ENCODE measurements at regions of chr2 and their contacts with region 1.

Region 1: DNA sequence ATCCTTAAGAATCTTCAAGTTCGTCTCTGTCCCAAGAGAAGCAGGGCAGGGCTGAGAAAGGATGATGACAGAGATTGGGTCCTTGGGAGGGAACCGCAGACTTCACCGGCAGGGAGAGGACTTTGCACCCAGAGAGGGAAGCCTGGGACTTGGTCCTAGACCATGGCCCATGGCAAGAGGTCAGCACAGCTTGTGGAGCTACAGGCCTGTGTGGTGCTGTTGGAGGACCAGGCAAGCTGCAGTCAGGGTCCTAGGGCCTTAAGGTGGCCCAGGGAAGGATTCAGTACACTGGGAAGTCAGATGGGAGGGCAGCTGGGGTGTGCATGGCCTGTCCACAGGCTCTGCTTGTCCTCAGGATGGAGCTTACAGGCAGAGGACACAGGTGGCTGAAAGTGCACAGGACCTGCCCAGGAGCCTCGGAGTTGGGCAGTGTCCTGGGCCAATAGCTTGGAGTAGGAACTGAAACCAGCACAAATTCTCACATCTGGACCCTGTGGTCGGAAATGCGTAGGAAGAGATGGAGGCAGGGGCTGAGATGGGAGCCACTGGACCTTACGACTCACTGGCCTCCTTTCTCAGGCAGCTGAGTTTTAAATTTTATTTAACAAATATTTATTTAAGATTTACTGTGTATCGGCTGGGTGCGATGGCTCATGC is 56.4 kb upstream of the TCF7L1 start:
- DNase-seq: no peak
- ATAC-seq: no peak
- H3K4me3 ChIP-seq: no peak overlapping the region
- H3K27ac ChIP-seq: no peak overlapping the region
- H3K4me1 ChIP-seq: no peaks in the 10 kb centered on the region
- H3K27me3 ChIP-seq: peaks cover 11% of the 10 kb centered on the region
- CTCF ChIP-seq: no peak
- POLR2A ChIP-seq: no peak
- RAD21 ChIP-seq: no peak

Region 2: GRCh38 chr2:84980263-84980983 is 96.3 kb before region 1 on chr2:
- CTCF ChIA-PET with region 1: no interaction called
- POLR2A ChIA-PET with region 1: no interaction called
- dilution Hi-C with region 1: no loop called
- in situ Hi-C with region 1: no loop called
- intact Hi-C with region 1: no loop called
- DNase-seq: no peak
- ATAC-seq: no peak
- H3K4me3 ChIP-seq: no peak overlapping the region
- H3K27ac ChIP-seq: peak overlapping the region; percentile 41; the same call in 1 of the 2 replicates
- H3K4me1 ChIP-seq: peaks cover 7% of the 10 kb centered on the region
- H3K27me3 ChIP-seq: no peaks in the 10 kb centered on the region
- CTCF ChIP-seq: no peak
- POLR2A ChIP-seq: no peak
- RAD21 ChIP-seq: no peak

Region 3: DNA sequence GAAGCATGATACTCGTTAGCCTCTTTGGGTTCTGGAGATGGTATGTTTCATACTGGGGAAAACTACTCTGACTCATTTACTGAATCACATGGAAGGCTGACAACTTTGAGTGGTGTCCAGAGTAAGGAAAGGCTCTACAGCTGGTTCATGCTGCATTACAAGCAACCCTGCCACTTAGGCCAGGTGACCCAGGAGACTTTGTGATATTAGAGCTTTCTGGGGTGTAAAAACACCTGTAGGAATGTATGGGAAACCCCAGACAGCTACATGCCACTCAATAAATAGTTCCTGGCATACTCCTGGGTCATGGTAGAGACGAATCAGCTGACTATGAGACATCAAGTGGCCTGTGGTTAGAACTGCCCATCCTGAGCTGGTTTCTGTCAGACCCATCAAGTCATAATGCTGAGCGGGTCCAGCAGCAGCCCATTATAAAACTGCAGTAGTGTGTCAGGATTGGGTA is 35.1 kb after region 1 on chr2:
- CTCF ChIA-PET with region 1: no interaction called
- POLR2A ChIA-PET with region 1: no interaction called
- dilution Hi-C with region 1: no loop called
- in situ Hi-C with region 1: loop called (anchors 5 kb)
- intact Hi-C with region 1: no loop called
- DNase-seq: peak; percentile 73
- ATAC-seq: peak; percentile 69
- H3K4me3 ChIP-seq: no peak overlapping the region
- H3K27ac ChIP-seq: no peak overlapping the region
- H3K4me1 ChIP-seq: no peaks in the 10 kb centered on the region
- H3K27me3 ChIP-seq: peaks cover 13% of the 10 kb centered on the region; the same call in 1 of the 2 replicates
- CTCF ChIP-seq: no peak
- POLR2A ChIP-seq: no peak
- RAD21 ChIP-seq: no peak